H1 (cell line): ENCODE measurements at regions of chr17 and their contacts with region 1.

Region 1: DNA sequence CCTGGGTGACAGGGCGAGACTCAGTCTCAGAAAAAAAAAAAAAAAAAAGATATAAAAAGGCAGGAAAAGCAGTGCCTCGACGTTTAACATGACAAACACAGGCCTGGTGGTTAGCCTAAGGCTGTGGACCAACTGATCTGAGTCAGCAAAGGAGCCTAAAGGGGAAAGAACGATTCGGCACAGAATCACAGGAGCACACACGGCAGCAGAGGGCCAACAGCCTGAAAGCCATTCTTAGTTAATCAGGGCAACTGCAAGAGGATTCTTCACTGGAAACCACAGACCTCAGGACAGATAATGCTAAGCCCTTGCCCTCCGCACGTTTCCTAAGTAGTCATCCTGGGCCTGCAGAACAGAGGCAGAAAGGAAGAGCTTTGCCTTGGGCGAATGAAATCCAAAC is 14.7 kb downstream of the TMEM11 start:
- DNase-seq: peak in 1 of 2 experiments; percentile 65
- H3K4me3 ChIP-seq: peak overlapping the region in 3 of 4 experiments; percentile 2 to 33 (median 5); a peak in 3 of 8 replicates
- H3K27ac ChIP-seq: peak overlapping the region; percentile 61
- H3K4me1 ChIP-seq: peaks cover 16 to 27% (median 21%) of the 10 kb centered on the region in 4 experiments
- H3K27me3 ChIP-seq: no peaks in the 10 kb centered on the region
- CTCF ChIP-seq: no peak
- EP300 ChIP-seq: no peak
- POLR2A ChIP-seq: no peak
- RAD21 ChIP-seq: no peak

Region 2: DNA sequence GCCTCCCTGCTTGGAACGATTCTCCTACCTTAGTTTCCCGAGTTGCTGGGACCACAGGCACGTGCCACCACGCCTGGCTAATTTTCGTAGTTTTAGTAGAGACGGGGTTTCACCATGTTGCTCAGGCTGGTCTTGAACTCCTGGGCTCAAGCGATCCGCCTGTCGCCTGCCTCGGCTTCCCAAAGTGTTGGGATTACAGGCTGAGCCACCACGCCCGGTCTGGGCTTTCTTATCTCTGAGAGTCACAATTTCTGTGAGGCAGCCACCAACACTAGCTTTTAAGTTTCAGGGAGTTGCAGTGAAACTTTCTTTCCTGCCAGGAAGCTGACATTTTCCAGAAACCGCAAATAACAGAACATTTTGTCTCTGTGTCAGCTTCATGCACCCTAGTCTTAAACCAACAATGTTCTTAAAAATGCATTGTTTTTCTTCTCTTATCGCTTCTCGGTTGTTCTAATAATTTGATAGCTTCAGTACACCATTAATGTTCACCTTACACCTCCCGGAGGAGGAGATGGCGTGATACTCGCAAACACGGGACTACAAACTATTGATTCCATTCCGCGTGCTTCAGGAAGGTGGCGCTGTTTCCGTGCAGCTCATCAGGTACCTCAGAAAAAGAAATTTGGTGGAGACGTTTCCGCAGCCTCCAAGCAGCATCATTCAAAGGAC is 79.9 kb before region 1 on chr17:
- CTCF ChIA-PET with region 1: interaction called, 11 read pairs
- POLR2A ChIA-PET with region 1: no interaction called
- DNase-seq: peak in 1 of 2 experiments; percentile 76
- H3K4me3 ChIP-seq: no peak overlapping the region
- H3K27ac ChIP-seq: no peak overlapping the region
- H3K4me1 ChIP-seq: peaks cover 0 to 3% (median 0%) of the 10 kb centered on the region in 4 experiments; a peak in 1 of 7 replicates
- H3K27me3 ChIP-seq: no peaks in the 10 kb centered on the region
- CTCF ChIP-seq: peak; percentile 85 to 92 (median 86)
- EP300 ChIP-seq: no peak
- POLR2A ChIP-seq: no peak
- RAD21 ChIP-seq: peak; percentile 78 to 82

Region 3: DNA sequence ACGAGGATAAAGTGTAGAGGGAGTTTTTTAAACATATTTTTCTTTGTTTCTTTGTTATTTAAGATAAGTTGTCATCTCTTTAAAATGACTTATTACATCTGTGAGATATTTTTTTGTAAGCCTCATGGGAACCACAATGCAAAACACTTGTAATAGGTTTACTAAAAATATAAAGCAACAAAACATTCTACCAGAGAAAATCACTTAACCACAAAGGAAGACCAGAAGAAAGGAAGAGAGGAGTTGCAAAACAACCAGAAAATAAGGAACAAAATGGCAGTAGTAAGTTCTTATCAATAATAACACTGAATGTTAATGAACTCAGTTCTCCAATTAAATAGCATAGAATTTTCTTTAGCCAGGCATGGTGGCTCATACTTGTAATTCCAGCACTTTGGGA is 49.7 kb before region 1 on chr17:
- CTCF ChIA-PET with region 1: no interaction called
- POLR2A ChIA-PET with region 1: no interaction called
- DNase-seq: no peak
- H3K4me3 ChIP-seq: no peak overlapping the region
- H3K27ac ChIP-seq: no peak overlapping the region
- H3K4me1 ChIP-seq: no peaks in the 10 kb centered on the region
- H3K27me3 ChIP-seq: no peaks in the 10 kb centered on the region
- CTCF ChIP-seq: no peak
- EP300 ChIP-seq: no peak
- POLR2A ChIP-seq: no peak
- RAD21 ChIP-seq: no peak

Region 4: GRCh38 chr17:21214015-21214776 is 14.9 kb after region 1 on chr17 and contains the start of gene TMEM11:
- CTCF ChIA-PET with region 1: interaction called, 7 read pairs
- POLR2A ChIA-PET with region 1: interaction called, 42 read pairs
- DNase-seq: peak; percentile 83 to 97
- H3K4me3 ChIP-seq: peak within 1 kb of the TSS; percentile 85 to 97 (median 92)
- H3K27ac ChIP-seq: peak within 1 kb of the TSS; percentile 97
- H3K4me1 ChIP-seq: peaks cover 0 to 14% (median 5%) of the 10 kb centered on the region in 4 experiments; a peak in 4 of 7 replicates
- H3K27me3 ChIP-seq: no peaks in the 10 kb centered on the region
- CTCF ChIP-seq: no peak
- EP300 ChIP-seq: no peak
- POLR2A ChIP-seq: peak; percentile 25 to 61
- RAD21 ChIP-seq: no peak
- total RNA-seq, gene TMEM11: 33.3 and 34.2 TPM in 2 replicates

Region 5: DNA sequence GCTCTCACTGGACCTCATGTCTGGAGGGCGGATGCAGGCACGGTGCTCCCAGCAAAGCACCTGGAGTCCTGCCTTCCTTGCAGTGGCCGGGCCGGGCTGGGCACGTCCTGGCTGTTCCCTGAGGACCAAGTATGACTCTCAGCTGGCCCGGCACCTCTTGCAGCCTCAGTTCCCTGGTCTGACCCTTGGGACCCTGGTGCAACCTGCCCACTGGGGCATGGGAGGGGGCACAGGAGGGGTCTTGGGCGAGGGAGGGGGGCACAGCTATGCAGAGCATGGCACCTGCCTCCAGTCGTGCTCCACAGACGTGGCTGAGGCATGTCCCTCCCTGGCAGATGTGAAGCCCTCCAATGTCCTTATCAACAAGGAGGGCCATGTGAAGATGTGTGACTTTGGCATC is 104.8 kb after region 1 on chr17:
- CTCF ChIA-PET with region 1: no interaction called
- POLR2A ChIA-PET with region 1: no interaction called
- DNase-seq: no peak
- H3K4me3 ChIP-seq: no peak overlapping the region
- H3K27ac ChIP-seq: no peak overlapping the region
- H3K4me1 ChIP-seq: no peaks in the 10 kb centered on the region
- H3K27me3 ChIP-seq: no peaks in the 10 kb centered on the region
- CTCF ChIP-seq: no peak
- EP300 ChIP-seq: no peak
- POLR2A ChIP-seq: no peak
- RAD21 ChIP-seq: no peak

Region 6: GRCh38 chr17:21524211-21524591 is 324.9 kb after region 1 on chr17:
- CTCF ChIA-PET with region 1: no interaction called
- POLR2A ChIA-PET with region 1: no interaction called
- DNase-seq: peak in 1 of 2 experiments; percentile 8
- H3K4me3 ChIP-seq: no peak overlapping the region
- H3K27ac ChIP-seq: no peak overlapping the region
- H3K4me1 ChIP-seq: no peaks in the 10 kb centered on the region; a peak in 1 of 7 replicates
- H3K27me3 ChIP-seq: no peaks in the 10 kb centered on the region
- CTCF ChIP-seq: no peak
- EP300 ChIP-seq: no peak
- POLR2A ChIP-seq: no peak
- RAD21 ChIP-seq: no peak